HCT116 (cell line): ENCODE measurements at regions of chr1 and their contacts with region 1.

Region 1: GRCh38 chr1:18883636-18884418 is 18.5 kb downstream of the ALDH4A1 start:
- DNase-seq: peak; percentile 38
- ATAC-seq: peak; percentile 88
- H3K4me3 ChIP-seq: no peak overlapping the region
- H3K27ac ChIP-seq: no peak overlapping the region
- H3K4me1 ChIP-seq: peaks cover 0 to 5% of the 10 kb centered on the region in 2 experiments; a peak in 1 of 4 replicates
- H3K27me3 ChIP-seq: no peaks in the 10 kb centered on the region
- CTCF ChIP-seq: peak; percentile 80 to 92 (median 88)
- POLR2A ChIP-seq: no peak
- RAD21 ChIP-seq: peak; percentile 88

Region 2: DNA sequence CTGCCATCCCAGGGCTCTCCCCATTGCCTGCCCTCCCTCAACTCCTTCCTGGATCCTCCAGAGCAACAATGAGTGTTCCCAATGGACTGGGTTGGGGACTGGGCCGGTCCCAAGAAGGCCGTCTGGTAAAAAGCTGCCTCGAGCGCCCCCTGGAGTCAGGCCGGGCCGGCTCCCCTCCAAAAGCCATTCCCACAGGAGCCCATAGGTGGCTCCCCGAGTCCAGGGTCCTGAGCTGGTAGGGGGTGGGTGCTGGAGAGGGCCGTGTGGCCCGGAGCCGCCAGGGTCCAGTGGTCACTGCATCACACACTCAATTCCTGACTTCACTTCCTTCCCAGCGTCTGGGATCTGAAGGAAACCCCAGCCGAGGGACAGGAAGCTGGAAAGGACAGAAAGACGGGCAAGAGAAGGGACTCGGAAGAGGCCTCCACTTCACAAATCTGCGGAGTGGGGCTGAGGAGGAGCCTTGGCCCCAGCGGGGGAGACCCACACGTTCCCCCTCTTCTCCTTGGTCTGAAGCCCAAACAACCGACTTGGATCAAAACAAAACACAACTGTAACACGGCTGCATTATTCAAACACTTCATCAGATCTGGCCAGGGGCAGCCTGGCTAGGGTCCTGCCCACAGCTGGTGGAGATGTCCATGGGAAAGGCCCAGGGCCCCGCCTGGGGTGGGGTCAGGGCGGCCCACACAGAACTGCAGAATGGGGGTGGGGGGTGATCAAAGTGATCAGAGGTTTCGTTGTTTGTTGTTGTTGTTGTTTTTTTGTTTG is 29.4 kb after region 1 on chr1:
- CTCF ChIA-PET with region 1: interaction called, 12 read pairs
- POLR2A ChIA-PET with region 1: no interaction called
- RAD21 ChIA-PET with region 1: no interaction called
- intact Hi-C with region 1: no loop called
- DNase-seq: peak; percentile 50
- ATAC-seq: peak; percentile 98
- H3K4me3 ChIP-seq: no peak overlapping the region
- H3K27ac ChIP-seq: no peak overlapping the region
- H3K4me1 ChIP-seq: peaks cover 0 to 8% of the 10 kb centered on the region in 2 experiments; a peak in 1 of 4 replicates
- H3K27me3 ChIP-seq: no peaks in the 10 kb centered on the region
- CTCF ChIP-seq: peak; percentile 100
- POLR2A ChIP-seq: no peak
- RAD21 ChIP-seq: peak; percentile 97

Region 3: DNA sequence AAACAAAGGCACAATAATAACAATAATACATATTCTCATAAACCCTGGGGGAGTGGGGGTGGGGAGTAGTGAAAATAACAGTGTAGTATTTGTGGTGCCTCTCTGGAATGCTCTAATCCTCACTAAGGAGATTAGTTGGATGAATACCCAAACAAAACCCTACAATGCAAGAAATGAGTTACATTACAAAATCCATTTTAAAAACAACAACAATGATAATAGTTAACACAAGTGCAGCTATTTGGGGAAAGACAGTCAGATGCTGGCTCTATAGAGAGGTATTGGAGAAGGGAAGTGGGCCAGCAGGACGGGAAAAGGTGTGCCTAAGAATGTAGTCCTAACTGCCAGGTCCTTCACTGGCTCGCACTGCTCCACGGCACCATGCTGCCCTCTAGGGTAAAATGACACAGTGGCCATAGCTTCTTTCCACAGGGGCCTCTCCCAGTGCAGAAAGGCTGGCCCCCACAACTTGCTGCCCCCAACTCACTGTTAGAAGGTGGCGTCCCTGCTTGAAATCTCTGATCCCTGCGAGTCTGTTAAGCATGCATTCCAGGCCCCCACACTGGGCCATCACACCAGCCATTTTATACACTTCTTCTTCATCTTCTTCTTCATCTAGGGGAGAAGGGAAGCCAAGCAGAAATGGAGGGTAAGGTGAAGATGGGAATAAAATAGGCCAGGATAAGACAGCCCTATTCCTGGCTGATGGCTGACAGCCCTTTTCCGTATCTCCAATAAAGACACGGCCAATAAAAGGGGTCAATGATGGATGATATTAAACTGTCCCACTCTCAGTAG is 212.4 kb after region 1 on chr1:
- CTCF ChIA-PET with region 1: interaction called, 6 read pairs
- POLR2A ChIA-PET with region 1: no interaction called
- RAD21 ChIA-PET with region 1: interaction called, 6 to 7 read pairs
- intact Hi-C with region 1: loop called (anchors 1 kb)
- DNase-seq: peak; percentile 6
- ATAC-seq: peak; percentile 87
- H3K4me3 ChIP-seq: no peak overlapping the region
- H3K27ac ChIP-seq: no peak overlapping the region
- H3K4me1 ChIP-seq: no peaks in the 10 kb centered on the region
- H3K27me3 ChIP-seq: no peaks in the 10 kb centered on the region
- CTCF ChIP-seq: peak; percentile 51 to 81 (median 55)
- POLR2A ChIP-seq: no peak
- RAD21 ChIP-seq: peak; percentile 82

Region 4: DNA sequence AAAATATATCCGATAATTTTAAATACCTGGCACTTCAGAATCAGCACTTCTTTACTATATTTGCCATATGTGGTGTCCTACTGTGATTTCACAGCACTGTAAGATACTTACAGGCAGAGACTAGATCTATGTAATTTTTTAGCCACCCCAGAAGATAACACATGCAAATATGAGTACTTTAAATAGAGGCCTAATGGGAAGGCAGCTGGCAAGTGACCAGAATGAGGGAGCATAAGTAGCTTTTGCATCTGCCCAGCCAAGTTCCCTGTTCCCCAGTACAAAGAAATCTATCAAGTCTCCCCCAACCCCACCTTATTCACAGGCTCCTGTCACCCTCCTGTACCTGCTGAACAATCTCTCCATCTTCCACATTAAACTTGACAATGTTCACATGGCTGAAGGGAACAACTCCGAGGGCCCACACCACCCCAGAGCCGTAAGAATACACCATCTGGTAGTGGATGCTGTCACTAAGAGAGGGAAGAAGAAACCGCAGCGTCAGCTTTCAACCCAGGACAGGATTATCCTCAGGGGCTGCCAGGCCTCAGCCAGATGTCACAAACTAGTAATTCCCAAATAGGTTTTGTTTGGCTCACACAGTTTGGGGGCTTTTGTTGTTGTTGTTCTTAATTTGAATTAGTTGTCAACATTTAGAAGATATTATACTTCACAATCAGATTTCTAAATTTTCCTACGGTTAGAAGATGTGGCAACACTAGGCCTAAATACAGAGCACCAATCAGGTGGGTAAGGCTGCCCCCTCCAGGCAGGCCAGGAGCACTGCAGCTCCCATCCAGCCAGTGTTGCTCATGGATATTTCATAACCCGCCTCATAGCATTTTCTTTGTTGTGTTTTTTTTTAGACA is 357.1 kb after region 1 on chr1:
- CTCF ChIA-PET with region 1: interaction called, 4 read pairs
- POLR2A ChIA-PET with region 1: no interaction called
- RAD21 ChIA-PET with region 1: no interaction called
- intact Hi-C with region 1: loop called (anchors 5 kb)
- DNase-seq: peak; percentile 18
- ATAC-seq: peak; percentile 95
- H3K4me3 ChIP-seq: no peak overlapping the region
- H3K27ac ChIP-seq: no peak overlapping the region
- H3K4me1 ChIP-seq: no peaks in the 10 kb centered on the region
- H3K27me3 ChIP-seq: no peaks in the 10 kb centered on the region
- CTCF ChIP-seq: peak; percentile 72 to 96 (median 92)
- POLR2A ChIP-seq: no peak
- RAD21 ChIP-seq: peak; percentile 81